A549 (cell line): ENCODE measurements at regions of chr9 and their contacts with region 1.

Region 1: DNA sequence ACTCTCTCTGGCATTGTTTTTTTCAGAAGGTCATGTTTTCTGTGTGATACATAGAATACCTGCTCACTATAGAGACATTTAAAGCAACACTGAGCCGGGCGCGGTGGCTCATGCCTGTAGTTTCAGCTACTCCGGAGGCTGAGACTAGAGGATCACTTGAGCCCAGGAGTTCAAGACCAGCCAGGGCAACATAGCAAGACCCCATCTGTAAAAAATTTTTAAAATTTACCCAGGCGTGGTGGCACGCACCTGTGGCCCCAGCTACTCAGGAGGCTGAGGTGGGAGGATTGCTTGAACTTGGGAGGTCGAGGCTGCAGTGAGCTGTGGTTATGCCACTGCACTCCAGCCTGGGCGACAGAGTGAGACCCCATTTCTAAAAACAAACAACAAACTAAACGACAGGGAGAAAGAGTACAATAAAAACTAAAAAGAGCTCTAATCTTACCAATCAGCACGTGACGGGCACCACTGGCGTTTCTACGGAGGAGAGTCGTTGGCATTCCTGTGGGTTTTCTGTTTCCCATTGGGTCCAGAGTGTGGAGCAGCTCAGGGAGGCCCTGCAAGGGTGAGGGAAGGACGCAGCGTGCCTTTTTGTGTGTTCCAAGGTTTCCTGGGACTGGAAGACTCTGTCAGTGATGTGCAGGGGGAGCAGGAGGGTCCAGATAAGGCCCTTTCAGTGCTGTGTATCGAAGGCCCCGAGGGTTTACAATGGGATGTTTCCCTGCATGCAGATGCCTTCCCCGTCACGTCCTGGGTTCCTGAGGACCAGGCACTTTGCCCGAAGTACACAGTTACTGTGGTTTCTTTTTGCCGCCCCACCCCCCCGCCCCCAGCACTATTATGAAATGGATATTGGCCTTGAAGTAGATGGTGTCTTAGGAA is 7.2 kb upstream of the RNU6ATAC start:
- DNase-seq: no peak
- ATAC-seq: no peak
- H3K4me3 ChIP-seq: no peak overlapping the region
- H3K27ac ChIP-seq: peak overlapping the region in 1 of 2 experiments; percentile 5; a peak in 1 of 6 replicates
- H3K4me1 ChIP-seq: peaks cover 20% of the 10 kb centered on the region
- CTCF ChIP-seq: no peak
- EP300 ChIP-seq: no peak
- POLR2A ChIP-seq: no peak
- RAD21 ChIP-seq: no peak

Region 2: GRCh38 chr9:134185536-134186011 is 14.0 kb after region 1 on chr9:
- CTCF ChIA-PET with region 1: interaction called, 33 read pairs
- POLR2A ChIA-PET with region 1: no interaction called
- DNase-seq: no peak
- ATAC-seq: no peak
- H3K4me3 ChIP-seq: no peak overlapping the region
- H3K27ac ChIP-seq: no peak overlapping the region
- H3K4me1 ChIP-seq: no peaks in the 10 kb centered on the region
- CTCF ChIP-seq: no peak
- EP300 ChIP-seq: no peak
- POLR2A ChIP-seq: no peak
- RAD21 ChIP-seq: no peak

Region 3: DNA sequence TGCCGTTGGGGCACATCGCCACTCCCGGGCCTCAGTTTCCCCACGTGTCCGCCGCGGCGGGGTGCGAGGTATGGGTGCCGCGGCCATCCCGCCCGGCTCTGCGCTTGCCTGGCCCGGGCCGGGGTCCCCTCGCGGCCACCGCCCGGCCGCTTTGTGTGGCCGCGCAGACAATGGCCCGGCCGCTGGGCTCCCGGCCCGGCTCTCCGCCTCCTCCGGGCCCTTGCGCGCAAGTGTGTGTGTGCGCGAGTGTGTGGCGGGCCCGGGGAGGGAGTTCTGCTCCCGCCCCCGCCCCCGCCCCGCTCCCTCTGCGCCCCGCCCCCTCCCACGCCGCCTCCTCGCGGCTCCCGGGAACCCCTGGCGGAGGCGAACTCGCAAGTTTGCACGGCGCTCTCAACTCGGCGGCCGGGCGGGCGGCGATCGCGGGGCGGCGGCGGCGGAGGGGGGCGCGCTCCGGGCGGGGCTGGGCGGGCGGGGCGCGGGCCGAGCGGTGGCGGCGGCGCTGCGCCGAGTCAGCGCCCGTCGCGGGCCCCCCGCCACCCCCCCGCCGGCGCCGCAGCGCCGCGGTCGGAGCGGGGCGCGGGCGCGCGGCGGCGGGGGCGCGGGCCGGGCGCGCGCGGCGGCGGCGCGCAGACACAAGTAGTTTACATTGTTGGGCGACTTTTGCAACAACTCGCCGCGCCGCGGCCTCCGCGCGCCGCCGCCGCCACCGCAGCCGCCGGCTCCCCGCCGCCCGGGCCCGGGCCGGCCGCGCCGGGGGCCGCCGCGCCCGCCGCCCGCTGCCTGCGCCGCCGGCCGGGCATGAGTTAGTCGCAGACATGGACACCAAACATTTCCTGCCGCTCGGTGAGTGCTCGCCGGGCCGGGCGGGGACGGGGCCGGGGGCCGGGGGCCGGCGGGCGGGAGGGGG is 154.5 kb after region 1 on chr9 and contains the start of gene RXRA:
- CTCF ChIA-PET with region 1: interaction called, 11 read pairs
- POLR2A ChIA-PET with region 1: no interaction called
- DNase-seq: peak; percentile 78 to 85
- ATAC-seq: peak; percentile 63 to 64
- H3K4me3 ChIP-seq: peak within 1 kb of the TSS; percentile 93
- H3K27ac ChIP-seq: peak within 1 kb of the TSS; percentile 97 to 99
- H3K4me1 ChIP-seq: peaks cover 47% of the 10 kb centered on the region
- CTCF ChIP-seq: no peak; the same call in 2 of the 3 replicates
- EP300 ChIP-seq: no peak
- POLR2A ChIP-seq: peak; percentile 70
- RAD21 ChIP-seq: no peak; a peak in 1 of 5 replicates
- polyA plus RNA-seq, gene RXRA: 6.6 and 10.2 TPM in 2 replicates

Region 4: GRCh38 chr9:134381671-134382516 is 210.3 kb after region 1 on chr9:
- CTCF ChIA-PET with region 1: interaction called, 13 read pairs
- POLR2A ChIA-PET with region 1: no interaction called
- DNase-seq: no peak
- ATAC-seq: peak in 1 of 2 experiments; percentile 10; a peak in 1 of 6 replicates
- H3K4me3 ChIP-seq: no peak overlapping the region
- H3K27ac ChIP-seq: peak overlapping the region; percentile 93 to 97
- H3K4me1 ChIP-seq: peaks cover 95% of the 10 kb centered on the region
- CTCF ChIP-seq: peak; percentile 25
- EP300 ChIP-seq: no peak
- POLR2A ChIP-seq: no peak
- RAD21 ChIP-seq: no peak

Region 5: DNA sequence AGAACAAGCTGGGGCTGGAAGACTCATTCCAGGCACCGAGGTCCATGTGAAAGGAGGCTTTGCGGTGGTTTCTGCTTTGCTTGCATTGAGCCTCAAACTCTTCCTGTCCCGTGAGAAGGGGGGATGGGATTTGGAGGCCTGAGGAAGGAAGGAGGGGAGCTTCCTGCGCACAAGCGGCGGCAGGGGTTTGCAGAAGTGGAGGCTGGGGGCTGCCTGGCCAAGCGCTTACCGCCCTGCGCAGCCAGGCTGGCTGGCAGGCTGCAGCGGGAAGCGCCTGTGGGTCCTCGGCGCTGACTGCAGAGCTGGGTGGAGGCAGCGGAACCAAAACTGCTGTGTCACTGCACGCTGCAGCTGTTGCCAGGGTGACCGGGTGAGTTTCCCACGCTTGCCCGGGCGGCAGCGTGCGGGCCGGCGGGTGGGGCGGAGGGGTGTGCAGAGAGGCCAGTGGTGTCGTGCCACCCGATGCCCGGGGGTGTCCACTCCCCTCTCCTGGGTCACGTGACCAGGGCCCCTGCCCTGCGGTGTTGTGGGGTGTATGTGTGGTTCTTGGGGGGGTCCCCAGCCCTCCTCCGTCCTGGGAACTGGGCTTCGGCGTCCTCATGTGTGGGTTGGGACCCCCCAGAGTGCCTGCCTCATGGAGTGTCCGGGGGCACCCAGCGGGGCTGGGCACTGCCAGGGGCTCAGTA is 235.7 kb after region 1 on chr9:
- CTCF ChIA-PET with region 1: interaction called, 11 read pairs
- POLR2A ChIA-PET with region 1: no interaction called
- DNase-seq: peak; percentile 96 to 98
- ATAC-seq: peak; percentile 76 to 87
- H3K4me3 ChIP-seq: peak overlapping the region; percentile 33
- H3K27ac ChIP-seq: peak overlapping the region; percentile 99 to 100
- H3K4me1 ChIP-seq: peaks cover 86% of the 10 kb centered on the region
- CTCF ChIP-seq: no peak
- EP300 ChIP-seq: peak in 1 of 2 experiments; percentile 60; a peak in 3 of 5 replicates
- POLR2A ChIP-seq: peak; percentile 70
- RAD21 ChIP-seq: peak in 1 of 2 experiments; percentile 14; a peak in 2 of 5 replicates

Region 6: DNA sequence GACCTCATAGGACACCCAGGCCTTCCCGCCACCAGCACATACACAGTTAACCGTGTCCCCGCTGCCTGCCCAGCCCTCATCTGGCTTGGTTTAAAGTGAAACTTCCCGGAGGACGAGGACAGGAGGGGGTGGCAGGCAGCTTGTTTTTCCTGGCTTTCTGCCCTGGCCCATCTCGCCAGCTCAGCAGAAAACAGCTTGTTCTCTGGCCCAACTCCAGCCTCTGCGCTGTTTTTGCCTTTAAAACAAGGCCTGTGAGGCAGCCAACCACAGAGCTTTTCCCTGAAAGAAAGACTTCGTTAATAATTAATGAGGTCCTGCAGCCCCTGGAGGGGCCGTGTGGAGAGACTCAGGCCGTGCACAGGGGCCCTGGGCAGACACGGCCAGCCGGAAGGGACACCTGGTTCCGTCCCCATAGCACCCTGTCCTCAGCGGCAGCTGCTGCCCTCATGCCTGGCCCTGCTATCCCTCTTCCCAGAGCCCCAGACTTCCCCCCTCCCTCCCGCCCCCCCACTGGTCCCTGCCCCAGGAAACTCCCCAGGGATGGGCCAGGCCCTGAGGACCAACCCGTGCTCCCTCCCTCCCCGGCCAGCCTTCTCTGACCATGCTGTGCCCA is 263.4 kb after region 1 on chr9:
- CTCF ChIA-PET with region 1: interaction called, 178 read pairs
- POLR2A ChIA-PET with region 1: interaction called, 3 read pairs
- DNase-seq: peak; percentile 65 to 88
- ATAC-seq: peak; percentile 57 to 76
- H3K4me3 ChIP-seq: no peak overlapping the region
- H3K27ac ChIP-seq: peak overlapping the region; percentile 80 to 88
- H3K4me1 ChIP-seq: peaks cover 46% of the 10 kb centered on the region
- CTCF ChIP-seq: no peak
- EP300 ChIP-seq: no peak
- POLR2A ChIP-seq: no peak
- RAD21 ChIP-seq: peak in 1 of 2 experiments; percentile 35; a peak in 3 of 5 replicates